Activated CD4-positive, alpha-beta T cell treated with anti-CD3 and anti-CD28 coated beads for 36 hours (primary cell): ENCODE measurements at regions of chr11 and their contacts with region 1.

Region 1: DNA sequence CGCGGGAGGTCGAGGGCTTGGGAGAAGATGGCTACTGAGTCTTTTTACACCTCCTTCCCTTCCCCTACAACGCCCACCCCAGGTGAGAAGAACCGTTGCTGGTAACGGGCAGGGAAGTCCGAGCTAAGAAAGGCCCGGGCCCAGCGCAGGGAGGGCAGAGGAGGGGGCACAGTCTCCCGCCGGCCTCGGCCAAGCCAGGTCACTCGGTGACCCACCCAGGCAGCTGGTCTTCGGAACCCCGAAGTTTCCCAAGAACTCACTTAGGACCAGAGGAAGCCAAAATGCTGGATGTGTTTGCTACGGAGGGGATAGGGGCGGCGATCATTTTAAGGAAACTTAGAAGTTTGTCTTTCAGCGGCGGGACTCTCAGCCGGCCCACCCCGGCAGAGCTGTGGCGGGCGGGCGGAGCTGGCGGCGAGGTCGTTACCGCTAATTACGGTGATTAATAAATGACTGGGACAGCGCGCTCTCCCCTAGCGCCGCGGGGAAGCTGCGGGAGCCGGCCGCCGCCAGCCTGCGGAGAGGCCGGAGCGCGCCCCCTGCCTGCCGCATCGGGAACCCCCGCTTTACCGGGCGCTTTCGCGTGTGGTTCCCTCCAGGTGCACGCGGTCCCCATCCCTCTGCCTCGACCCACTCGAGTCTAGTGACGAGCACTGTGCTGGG is 820 bp downstream of the ROBO3 start:
- DNase-seq: peak; percentile 77
- ATAC-seq: peak; percentile 60
- H3K4me3 Mint-ChIP-seq: no peak overlapping the region
- H3K27ac Mint-ChIP-seq: no peak overlapping the region
- H3K4me1 Mint-ChIP-seq: peaks cover 31% of the 10 kb centered on the region
- H3K27me3 Mint-ChIP-seq: peaks cover 81% of the 10 kb centered on the region

Region 2: GRCh38 chr11:124415356-124415923 is 450.6 kb before region 1 on chr11:
- CTCF ChIA-PET with region 1: no interaction called
- POLR2A ChIA-PET with region 1: no interaction called
- intact Hi-C with region 1: loop called in 1 of 2 experiments (anchors 10 kb)
- DNase-seq: no peak
- ATAC-seq: no peak
- H3K4me3 Mint-ChIP-seq: no peak overlapping the region
- H3K27ac Mint-ChIP-seq: no peak overlapping the region
- H3K4me1 Mint-ChIP-seq: no peaks in the 10 kb centered on the region
- H3K27me3 Mint-ChIP-seq: peaks cover 8% of the 10 kb centered on the region

Region 3: GRCh38 chr11:124442442-124442841 is 423.6 kb before region 1 on chr11:
- CTCF ChIA-PET with region 1: no interaction called
- POLR2A ChIA-PET with region 1: no interaction called
- intact Hi-C with region 1: no loop called
- DNase-seq: no peak
- ATAC-seq: no peak
- H3K4me3 Mint-ChIP-seq: no peak overlapping the region
- H3K27ac Mint-ChIP-seq: no peak overlapping the region
- H3K4me1 Mint-ChIP-seq: no peaks in the 10 kb centered on the region
- H3K27me3 Mint-ChIP-seq: peaks cover 24% of the 10 kb centered on the region

Region 4: GRCh38 chr11:124644426-124645280 is 221.4 kb before region 1 on chr11:
- CTCF ChIA-PET with region 1: interaction called, 5 read pairs
- POLR2A ChIA-PET with region 1: no interaction called
- intact Hi-C with region 1: loop called in 1 of 2 experiments (anchors 2 kb)
- DNase-seq: peak; percentile 38
- ATAC-seq: no peak
- H3K4me3 Mint-ChIP-seq: no peak overlapping the region
- H3K27ac Mint-ChIP-seq: no peak overlapping the region
- H3K4me1 Mint-ChIP-seq: peaks cover 3% of the 10 kb centered on the region
- H3K27me3 Mint-ChIP-seq: no peaks in the 10 kb centered on the region

Region 5: DNA sequence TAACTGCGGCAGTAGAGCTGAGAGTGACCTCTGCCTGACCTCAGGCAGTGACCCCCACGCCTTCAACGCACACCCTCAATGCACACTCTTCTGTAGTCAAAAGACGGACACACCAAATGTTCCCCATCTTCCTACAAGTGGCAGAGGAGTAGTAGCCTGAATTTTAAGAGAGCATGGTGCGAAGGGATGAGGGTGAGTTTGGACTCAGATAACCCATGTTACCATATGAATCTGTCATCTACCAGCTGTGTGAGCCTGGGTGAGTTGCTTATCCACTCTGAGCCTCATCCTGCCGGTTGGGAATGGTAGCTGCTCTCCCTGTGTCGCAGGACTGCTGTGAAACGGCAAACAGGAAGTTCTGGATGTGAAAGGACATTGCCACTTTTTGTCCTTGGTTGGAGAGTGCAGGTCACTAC is 21.4 kb before region 1 on chr11:
- CTCF ChIA-PET with region 1: interaction called, 13 read pairs
- POLR2A ChIA-PET with region 1: no interaction called
- intact Hi-C with region 1: loop called in 1 of 2 experiments (anchors 1 kb)
- DNase-seq: no peak
- ATAC-seq: no peak
- H3K4me3 Mint-ChIP-seq: no peak overlapping the region
- H3K27ac Mint-ChIP-seq: no peak overlapping the region
- H3K4me1 Mint-ChIP-seq: peaks cover 13% of the 10 kb centered on the region
- H3K27me3 Mint-ChIP-seq: peaks cover 80% of the 10 kb centered on the region

Region 6: GRCh38 chr11:124891373-124891861 is 25.4 kb after region 1 on chr11:
- CTCF ChIA-PET with region 1: interaction called, 12 read pairs
- POLR2A ChIA-PET with region 1: no interaction called
- intact Hi-C with region 1: no loop called
- DNase-seq: no peak
- ATAC-seq: no peak
- H3K4me3 Mint-ChIP-seq: no peak overlapping the region
- H3K27ac Mint-ChIP-seq: no peak overlapping the region
- H3K4me1 Mint-ChIP-seq: no peaks in the 10 kb centered on the region
- H3K27me3 Mint-ChIP-seq: no peaks in the 10 kb centered on the region